Activated T-helper 2 cell treated with anti-CD3 and anti-CD28 coated beads, Interferon-gamma antibody, Interleukin-2, Interleukin-4, amounts not matched to agents 10 μg/mL and 5 μg/mL and 100 μg/mL, durations not matched to agents 14 hours and 24 hours and 36 hours (primary cell): ENCODE measurements at regions of chr21 and their contacts with region 1.

Region 1: DNA sequence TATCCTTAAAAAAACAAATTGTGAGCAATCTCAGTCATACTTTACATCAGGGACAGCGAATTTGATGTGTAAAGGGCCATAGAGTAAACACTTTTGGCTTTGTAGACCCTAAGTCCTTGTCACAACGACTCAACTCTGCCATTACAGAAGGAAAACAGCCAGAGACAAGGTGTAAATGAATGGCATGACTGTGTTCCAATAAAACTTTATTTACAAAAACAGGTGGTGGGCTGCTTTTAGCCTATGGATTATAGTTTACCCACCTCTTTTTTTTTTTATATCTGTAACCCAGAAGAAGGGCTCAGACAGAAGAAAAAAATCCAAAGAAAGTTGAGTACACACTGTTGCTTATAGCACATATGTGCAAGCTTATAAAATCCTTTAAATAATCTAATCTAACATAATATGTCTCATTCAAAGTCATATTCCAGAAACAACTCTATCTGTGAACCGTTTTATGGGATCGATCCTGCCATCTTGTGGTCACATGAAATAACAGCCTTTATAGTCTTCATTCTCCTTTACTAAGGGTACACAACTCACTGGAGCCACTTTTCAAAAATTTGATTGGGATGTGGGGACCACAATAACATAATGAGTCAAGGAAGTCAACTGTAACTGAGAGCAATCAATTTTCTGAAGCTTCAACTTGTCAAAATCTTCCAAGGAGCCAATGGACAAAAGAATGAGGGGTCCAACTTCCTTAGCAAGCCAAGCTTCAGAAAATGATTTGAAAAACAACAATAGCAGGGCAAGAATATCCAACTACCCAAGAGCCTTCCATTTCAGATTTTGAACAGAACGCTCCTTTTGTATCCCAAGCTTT is 142.2 kb upstream of the KRTAP19-8 start:
- DNase-seq: no peak
- H3K4me3 Mint-ChIP-seq: peak overlapping the region; percentile 93
- H3K27ac Mint-ChIP-seq: peak overlapping the region; percentile 99
- H3K4me1 Mint-ChIP-seq: peaks cover 62% of the 10 kb centered on the region
- H3K27me3 Mint-ChIP-seq: no peaks in the 10 kb centered on the region

Region 2: GRCh38 chr21:31098576-31099005 is 81.9 kb before region 1 on chr21:
- intact Hi-C with region 1: loop called (anchors 1 kb)
- DNase-seq: peak; percentile 60
- H3K4me3 Mint-ChIP-seq: no peak overlapping the region
- H3K27ac Mint-ChIP-seq: no peak overlapping the region
- H3K4me1 Mint-ChIP-seq: peaks cover 27% of the 10 kb centered on the region
- H3K27me3 Mint-ChIP-seq: peaks cover 13% of the 10 kb centered on the region

Region 3: GRCh38 chr21:31132574-31133242 is 47.8 kb before region 1 on chr21:
- intact Hi-C with region 1: loop called (anchors 1 kb)
- DNase-seq: peak; percentile 69
- H3K4me3 Mint-ChIP-seq: peak overlapping the region; percentile 70
- H3K27ac Mint-ChIP-seq: peak overlapping the region; percentile 98
- H3K4me1 Mint-ChIP-seq: peaks cover 72% of the 10 kb centered on the region
- H3K27me3 Mint-ChIP-seq: no peaks in the 10 kb centered on the region

Region 4: DNA sequence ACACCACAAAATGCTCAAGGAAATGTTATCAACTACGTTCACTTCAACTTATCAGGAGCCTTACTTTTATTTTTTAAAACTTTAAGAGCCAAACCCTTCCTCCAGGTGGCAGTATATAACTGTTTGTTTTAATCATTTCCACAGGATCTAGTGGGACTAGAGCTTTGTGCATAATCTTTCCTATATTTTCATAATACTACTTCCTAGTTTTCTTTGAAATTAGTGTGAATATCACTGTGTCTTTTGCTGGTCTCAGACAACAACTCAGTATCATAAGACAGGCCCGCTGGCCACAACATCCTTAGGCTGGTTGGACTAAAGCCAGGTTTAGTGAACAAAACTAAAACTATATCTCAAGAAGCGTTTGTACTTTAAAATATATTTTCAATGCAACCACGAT is 18.1 kb after region 1 on chr21:
- intact Hi-C with region 1: loop called (anchors 1 kb)
- DNase-seq: no peak
- H3K4me3 Mint-ChIP-seq: no peak overlapping the region
- H3K27ac Mint-ChIP-seq: no peak overlapping the region
- H3K4me1 Mint-ChIP-seq: peaks cover 39% of the 10 kb centered on the region
- H3K27me3 Mint-ChIP-seq: no peaks in the 10 kb centered on the region

Region 5: GRCh38 chr21:31558962-31559367 is 378.5 kb after region 1 on chr21:
- intact Hi-C with region 1: loop called (anchors 2 kb)
- DNase-seq: peak; percentile 92
- H3K4me3 Mint-ChIP-seq: peak overlapping the region; percentile 81
- H3K27ac Mint-ChIP-seq: no peak overlapping the region
- H3K4me1 Mint-ChIP-seq: peaks cover 34% of the 10 kb centered on the region
- H3K27me3 Mint-ChIP-seq: peaks cover 40% of the 10 kb centered on the region

Region 6: DNA sequence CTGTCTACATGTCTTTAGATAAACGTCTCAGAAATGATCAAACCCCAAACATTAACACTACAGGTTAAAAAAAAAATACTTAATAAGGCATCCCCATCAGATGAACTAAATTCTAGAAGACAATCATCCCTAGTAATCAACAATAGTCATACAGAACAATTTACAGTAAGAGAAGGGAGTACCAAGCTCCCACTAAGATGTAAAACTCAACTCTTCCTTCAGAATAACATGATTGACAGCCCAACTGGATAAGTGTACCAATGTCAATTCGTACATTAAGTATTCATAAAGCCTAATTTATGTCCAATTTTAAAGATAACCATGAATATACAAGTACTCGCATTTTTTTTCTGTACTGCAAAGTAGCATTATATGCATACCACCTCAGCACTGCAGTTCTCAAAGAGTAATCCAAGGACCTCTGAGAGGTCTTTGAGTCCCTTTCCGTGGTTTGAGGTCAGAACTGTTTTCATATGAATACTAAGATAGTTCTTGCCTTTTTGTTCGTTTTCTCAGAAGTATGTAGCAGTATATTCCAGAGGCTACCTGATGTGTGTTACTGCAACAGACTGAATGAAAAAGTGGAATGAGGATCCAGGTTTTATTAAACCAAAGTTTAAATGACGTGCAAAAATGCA is 544.9 kb after region 1 on chr21:
- intact Hi-C with region 1: loop called (anchors 10 kb)
- DNase-seq: no peak
- H3K4me3 Mint-ChIP-seq: no peak overlapping the region
- H3K27ac Mint-ChIP-seq: peak overlapping the region; percentile 4
- H3K4me1 Mint-ChIP-seq: peaks cover 28% of the 10 kb centered on the region
- H3K27me3 Mint-ChIP-seq: no peaks in the 10 kb centered on the region